ENCODE measurements at regions of chr4 and their contacts with region 1.

Region 1: DNA sequence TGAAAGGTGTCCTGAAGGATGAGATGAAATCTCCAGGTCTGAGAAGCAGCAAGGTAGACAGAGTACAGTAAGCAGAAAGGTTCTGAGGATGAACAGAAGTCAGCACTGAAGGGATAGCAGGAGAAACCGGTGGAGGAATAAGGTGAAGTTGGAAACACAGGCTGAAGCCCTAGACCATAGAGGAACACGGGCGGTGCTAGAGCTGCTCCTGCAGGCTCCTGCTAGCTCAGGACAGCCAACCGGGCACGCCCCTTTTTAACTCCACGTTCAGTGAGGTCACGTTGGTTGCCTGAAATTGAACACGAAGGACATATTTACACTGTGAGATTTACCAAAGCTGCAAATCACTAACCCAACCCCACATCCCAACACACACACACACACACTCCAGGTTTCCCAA is 1886.4 kb upstream of the AGA start:
- DNase-seq: no peak
- ATAC-seq: no peak
- H3K4me3 ChIP-seq: no peak overlapping the region
- H3K27ac ChIP-seq: no peak overlapping the region
- H3K4me1 ChIP-seq: no peaks in the 10 kb centered on the region
- H3K27me3 ChIP-seq: no peaks in the 10 kb centered on the region
- CTCF ChIP-seq: no peak
- EP300 ChIP-seq: no peak
- POLR2A ChIP-seq: no peak
- RAD21 ChIP-seq: no peak

Region 2: DNA sequence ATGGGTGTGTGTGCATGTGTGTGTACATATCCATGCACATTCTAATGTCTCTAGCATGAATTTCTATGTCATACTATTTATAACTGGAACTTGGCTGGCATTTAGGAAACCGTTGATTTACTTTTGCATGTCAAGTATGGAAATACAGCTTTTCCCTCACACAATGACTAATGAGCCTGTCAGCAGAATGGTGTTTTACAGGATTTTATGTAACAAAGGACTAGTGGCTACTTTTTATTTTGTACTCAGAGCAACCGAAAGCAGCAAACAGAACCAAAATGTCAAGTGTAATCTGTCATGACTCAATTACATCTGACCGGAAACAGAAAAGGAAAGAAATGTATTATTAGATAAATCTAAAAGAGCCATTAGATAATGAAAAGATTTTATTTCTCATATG is 25.2 kb after region 1 on chr4:
- CTCF ChIA-PET with region 1: no interaction called
- POLR2A ChIA-PET with region 1: no interaction called
- in situ Hi-C with region 1: no loop called
- intact Hi-C with region 1: loop called (anchors 1 kb)
- DNase-seq: no peak
- ATAC-seq: no peak
- H3K4me3 ChIP-seq: no peak overlapping the region
- H3K27ac ChIP-seq: no peak overlapping the region
- H3K4me1 ChIP-seq: no peaks in the 10 kb centered on the region
- H3K27me3 ChIP-seq: no peaks in the 10 kb centered on the region
- CTCF ChIP-seq: no peak
- EP300 ChIP-seq: no peak
- POLR2A ChIP-seq: no peak
- RAD21 ChIP-seq: no peak

Measured in HepG2 (cell line).